ENCODE measurements at regions of chr2 and their contacts with region 1.

Region 1: GRCh38 chr2:3223080-3223923 is 154.3 kb downstream of the EIPR1 start:
- DNase-seq: peak; percentile 97
- H3K4me3 Mint-ChIP-seq: peak overlapping the region; percentile 45
- H3K27ac Mint-ChIP-seq: peak overlapping the region; percentile 100
- H3K4me1 Mint-ChIP-seq: peaks cover 51% of the 10 kb centered on the region
- H3K27me3 Mint-ChIP-seq: no peaks in the 10 kb centered on the region

Region 2: DNA sequence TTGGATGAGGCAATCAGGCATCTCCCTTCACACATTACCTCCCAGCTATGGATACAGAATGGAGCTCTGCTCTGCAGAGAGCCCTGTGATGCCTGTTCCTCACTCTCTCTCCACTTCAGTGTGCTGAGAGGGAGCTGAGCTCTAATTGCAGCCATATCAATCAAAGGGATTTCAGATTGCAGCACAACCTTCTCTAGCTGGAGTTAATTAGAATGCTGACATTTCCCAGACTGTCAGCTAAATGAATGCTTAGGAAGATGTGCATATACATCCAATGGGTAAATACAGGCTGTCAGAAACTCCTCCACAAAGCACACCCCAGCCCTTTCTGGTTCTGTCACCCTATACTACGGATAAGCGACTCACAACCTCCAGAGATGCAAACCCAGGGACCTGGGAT is 248.3 kb before region 1 on chr2:
- CTCF ChIA-PET with region 1: no interaction called
- POLR2A ChIA-PET with region 1: no interaction called
- intact Hi-C with region 1: no loop called
- DNase-seq: no peak
- H3K4me3 Mint-ChIP-seq: no peak overlapping the region
- H3K27ac Mint-ChIP-seq: no peak overlapping the region
- H3K4me1 Mint-ChIP-seq: no peaks in the 10 kb centered on the region
- H3K27me3 Mint-ChIP-seq: peaks cover 5% of the 10 kb centered on the region

Region 3: GRCh38 chr2:3094999-3095958 is 128.0 kb before region 1 on chr2:
- CTCF ChIA-PET with region 1: no interaction called
- POLR2A ChIA-PET with region 1: no interaction called
- intact Hi-C with region 1: no loop called
- DNase-seq: no peak
- H3K4me3 Mint-ChIP-seq: no peak overlapping the region
- H3K27ac Mint-ChIP-seq: no peak overlapping the region
- H3K4me1 Mint-ChIP-seq: peaks cover 2% of the 10 kb centered on the region
- H3K27me3 Mint-ChIP-seq: peaks cover 6% of the 10 kb centered on the region

Region 4: GRCh38 chr2:3242747-3243369 is 19.6 kb after region 1 on chr2:
- CTCF ChIA-PET with region 1: interaction called, 3 read pairs
- POLR2A ChIA-PET with region 1: interaction called, 8 read pairs
- intact Hi-C with region 1: loop called (anchors 1 kb)
- DNase-seq: peak; percentile 65
- H3K4me3 Mint-ChIP-seq: peak overlapping the region; percentile 33
- H3K27ac Mint-ChIP-seq: peak overlapping the region; percentile 74
- H3K4me1 Mint-ChIP-seq: peaks cover 30% of the 10 kb centered on the region
- H3K27me3 Mint-ChIP-seq: no peaks in the 10 kb centered on the region

Region 5: GRCh38 chr2:3293221-3293620 is 69.9 kb after region 1 on chr2:
- CTCF ChIA-PET with region 1: no interaction called
- POLR2A ChIA-PET with region 1: no interaction called
- intact Hi-C with region 1: no loop called
- DNase-seq: no peak
- H3K4me3 Mint-ChIP-seq: no peak overlapping the region
- H3K27ac Mint-ChIP-seq: no peak overlapping the region
- H3K4me1 Mint-ChIP-seq: no peaks in the 10 kb centered on the region
- H3K27me3 Mint-ChIP-seq: no peaks in the 10 kb centered on the region

Region 6: DNA sequence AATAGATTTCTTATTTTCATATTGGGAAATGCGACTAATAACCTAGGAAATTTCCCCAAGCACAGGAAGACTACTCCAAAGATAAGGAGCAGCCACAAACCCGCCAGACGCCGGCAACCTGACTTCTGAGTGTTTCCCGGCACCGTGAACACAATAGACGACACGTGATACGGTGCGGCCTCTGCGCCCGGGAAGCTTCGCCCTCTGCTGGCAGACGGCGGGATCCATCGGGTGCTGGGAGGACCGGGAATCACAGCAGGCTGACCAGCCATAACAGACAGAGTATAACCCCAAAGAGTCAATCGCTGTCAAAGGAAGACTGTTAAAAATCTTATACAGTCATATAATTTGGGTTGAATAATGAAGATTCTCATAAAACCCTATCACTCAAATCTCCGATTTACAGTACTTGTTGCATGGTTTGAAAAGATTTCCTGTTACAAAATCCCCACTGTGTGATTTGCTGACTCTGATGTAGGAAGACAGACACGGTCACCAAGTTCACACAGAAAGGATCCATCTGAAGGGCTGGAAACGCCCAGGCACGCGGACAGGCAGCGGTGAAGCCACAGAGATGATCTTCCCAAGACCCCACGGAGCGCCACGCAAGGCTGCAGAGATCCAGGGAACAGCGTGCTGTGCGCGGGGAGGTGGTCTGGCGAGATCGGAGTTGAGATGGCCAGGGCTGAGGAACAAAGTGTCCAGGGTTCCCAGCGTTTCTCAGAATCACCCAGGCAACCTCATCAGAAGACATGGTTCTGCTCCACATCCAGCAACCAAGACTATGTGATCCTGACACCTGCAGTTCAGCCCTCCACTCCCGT is 80.5 kb after region 1 on chr2:
- CTCF ChIA-PET with region 1: interaction called, 10 read pairs
- POLR2A ChIA-PET with region 1: no interaction called
- intact Hi-C with region 1: loop called (anchors 1 kb)
- DNase-seq: peak; percentile 90
- H3K4me3 Mint-ChIP-seq: peak overlapping the region; percentile 37
- H3K27ac Mint-ChIP-seq: peak overlapping the region; percentile 42
- H3K4me1 Mint-ChIP-seq: peaks cover 20% of the 10 kb centered on the region
- H3K27me3 Mint-ChIP-seq: no peaks in the 10 kb centered on the region

Region 7: DNA sequence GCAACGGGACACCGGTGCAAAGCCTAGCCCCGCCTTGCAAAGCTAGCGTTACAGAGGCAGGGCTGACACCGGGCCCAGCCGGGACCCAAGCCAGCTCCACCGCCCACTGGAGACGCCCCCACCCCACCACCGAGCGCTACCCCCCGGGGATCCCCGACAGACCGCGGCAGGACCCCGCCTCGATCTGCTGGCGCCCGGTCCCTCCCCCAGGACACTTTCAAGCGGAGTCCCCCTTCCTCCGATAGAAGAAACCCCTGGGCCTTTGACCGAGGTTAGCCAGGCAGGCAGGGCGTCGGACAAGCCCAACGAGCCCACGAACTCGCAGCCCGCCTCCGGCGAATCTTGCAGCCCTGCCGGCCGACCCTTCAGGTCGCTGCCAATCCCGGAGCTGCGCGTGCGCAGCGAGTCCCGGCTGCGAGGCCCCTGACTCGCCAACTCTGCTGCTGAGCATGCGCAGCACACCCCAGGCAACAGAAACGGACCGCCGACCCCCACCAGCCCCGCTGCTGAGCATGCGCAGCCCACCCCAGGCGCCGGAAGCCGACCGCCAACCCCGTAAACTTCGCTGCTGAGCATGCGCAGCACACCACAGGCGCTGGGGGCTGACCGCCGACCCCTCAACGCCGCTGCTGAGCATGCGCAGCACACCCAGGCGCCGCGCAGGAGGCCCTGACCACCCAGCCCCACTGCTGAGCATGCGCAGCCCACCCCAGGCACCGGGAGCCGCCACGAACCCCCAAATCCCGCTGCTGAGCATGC is 295.4 kb after region 1 on chr2:
- CTCF ChIA-PET with region 1: no interaction called
- POLR2A ChIA-PET with region 1: no interaction called
- intact Hi-C with region 1: loop called (anchors 2 kb)
- DNase-seq: peak; percentile 99
- H3K4me3 Mint-ChIP-seq: peak overlapping the region; percentile 84
- H3K27ac Mint-ChIP-seq: peak overlapping the region; percentile 89
- H3K4me1 Mint-ChIP-seq: peaks cover 38% of the 10 kb centered on the region
- H3K27me3 Mint-ChIP-seq: no peaks in the 10 kb centered on the region

Region 8: DNA sequence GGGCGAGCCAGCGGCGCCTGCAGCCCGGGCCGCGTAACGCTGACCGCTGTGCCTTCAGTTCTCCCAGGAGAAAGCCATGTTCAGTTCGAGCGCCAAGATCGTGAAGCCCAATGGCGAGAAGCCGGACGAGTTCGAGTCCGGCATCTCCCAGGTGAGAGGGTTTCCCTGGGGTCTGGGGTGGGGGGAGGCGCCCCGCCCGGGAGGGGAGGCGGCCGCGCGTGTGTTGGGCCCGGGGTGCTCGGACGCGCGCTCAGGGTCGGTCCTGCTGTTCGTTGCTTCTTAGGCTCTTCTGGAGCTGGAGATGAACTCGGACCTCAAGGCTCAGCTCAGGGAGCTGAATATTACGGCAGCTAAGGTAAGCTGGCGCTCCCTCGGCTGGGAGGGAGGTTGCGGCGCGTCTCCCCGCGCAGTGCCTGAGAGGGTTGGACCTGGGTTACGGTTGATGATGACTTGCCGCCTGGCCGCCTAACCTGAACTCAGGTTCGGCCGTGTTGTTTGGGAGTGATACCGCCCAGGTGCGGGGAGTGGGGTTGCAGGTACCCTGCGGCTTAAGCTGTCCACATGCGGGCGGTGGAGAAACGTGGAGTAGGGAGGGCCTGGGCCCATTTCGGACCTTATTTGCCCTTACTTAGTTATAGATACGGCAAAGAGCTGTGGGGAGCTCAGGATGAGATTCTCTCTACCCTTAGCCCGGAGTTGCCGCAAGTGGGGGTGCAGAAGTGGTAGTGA is 352.4 kb after region 1 on chr2:
- CTCF ChIA-PET with region 1: no interaction called
- POLR2A ChIA-PET with region 1: no interaction called
- intact Hi-C with region 1: loop called (anchors 2 kb)
- DNase-seq: peak; percentile 42
- H3K4me3 Mint-ChIP-seq: peak overlapping the region; percentile 98
- H3K27ac Mint-ChIP-seq: peak overlapping the region; percentile 93
- H3K4me1 Mint-ChIP-seq: peaks cover 44% of the 10 kb centered on the region
- H3K27me3 Mint-ChIP-seq: no peaks in the 10 kb centered on the region

Measured in activated CD4-positive, alpha-beta memory T cell treated with anti-CD3 and anti-CD28 coated beads for 36 hours (primary cell).